ENCODE measurements at regions of chr19 and their contacts with region 1.

Region 1: GRCh38 chr19:46265217-46265828 is 31.5 kb upstream of the HIF3A start:
- DNase-seq: peak; percentile 70
- H3K4me3 ChIP-seq: no peak overlapping the region
- H3K27ac ChIP-seq: no peak overlapping the region
- H3K4me1 ChIP-seq: no peaks in the 10 kb centered on the region
- H3K27me3 ChIP-seq: no peaks in the 10 kb centered on the region
- CTCF ChIP-seq: peak; percentile 77

Region 2: DNA sequence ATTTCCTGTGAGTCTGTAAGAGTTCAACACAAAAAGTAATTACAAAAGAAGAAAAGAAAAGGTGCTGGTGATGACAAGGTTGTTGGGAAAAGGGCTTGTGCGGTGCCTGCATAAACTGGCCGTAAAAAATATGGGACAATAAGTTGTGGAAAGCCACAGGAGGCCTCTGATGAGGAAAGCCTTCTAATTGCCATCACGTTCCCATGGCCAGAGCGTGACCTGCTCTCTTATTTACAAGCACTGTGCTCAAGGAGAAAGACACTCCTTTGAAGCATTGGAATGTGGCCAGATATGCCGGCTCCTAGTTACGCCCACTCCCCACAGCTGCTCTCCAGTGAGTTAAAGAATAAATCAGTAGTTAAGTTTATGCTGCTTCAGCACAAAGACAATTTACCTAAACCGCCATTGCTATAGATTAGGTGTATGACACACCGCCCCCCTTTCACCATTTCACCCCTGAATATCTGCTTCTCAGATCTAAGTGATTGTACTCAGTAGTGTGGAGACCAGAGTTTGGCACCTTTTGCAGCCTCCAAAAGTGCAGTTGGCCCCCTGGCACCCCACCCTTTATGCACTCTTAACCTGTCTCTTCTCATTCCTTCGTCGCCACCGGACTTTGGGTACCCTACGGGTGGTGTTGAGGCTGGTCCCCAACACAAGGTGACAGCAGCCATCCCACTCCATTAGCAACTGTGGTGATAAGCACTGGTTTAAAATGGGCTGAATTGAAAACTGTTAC is 234.3 kb before region 1 on chr19:
- intact Hi-C with region 1: loop called (anchors 2 kb)
- DNase-seq: no peak
- H3K4me3 ChIP-seq: no peak overlapping the region
- H3K27ac ChIP-seq: no peak overlapping the region
- H3K4me1 ChIP-seq: no peaks in the 10 kb centered on the region
- H3K27me3 ChIP-seq: no peaks in the 10 kb centered on the region
- CTCF ChIP-seq: no peak

Region 3: GRCh38 chr19:46192992-46193650 is 72.2 kb before region 1 on chr19:
- intact Hi-C with region 1: loop called (anchors 5 kb)
- DNase-seq: peak; percentile 20
- H3K4me3 ChIP-seq: no peak overlapping the region
- H3K27ac ChIP-seq: no peak overlapping the region
- H3K4me1 ChIP-seq: no peaks in the 10 kb centered on the region
- H3K27me3 ChIP-seq: no peaks in the 10 kb centered on the region
- CTCF ChIP-seq: no peak

Region 4: GRCh38 chr19:46319613-46320012 is 54.3 kb after region 1 on chr19:
- intact Hi-C with region 1: no loop called
- DNase-seq: no peak
- H3K4me3 ChIP-seq: no peak overlapping the region
- H3K27ac ChIP-seq: no peak overlapping the region
- H3K4me1 ChIP-seq: no peaks in the 10 kb centered on the region
- H3K27me3 ChIP-seq: no peaks in the 10 kb centered on the region
- CTCF ChIP-seq: no peak

Region 5: GRCh38 chr19:46404055-46404752 is 138.9 kb after region 1 on chr19:
- intact Hi-C with region 1: no loop called
- DNase-seq: peak; percentile 82
- H3K4me3 ChIP-seq: peak overlapping the region; percentile 47
- H3K27ac ChIP-seq: no peak overlapping the region
- H3K4me1 ChIP-seq: peaks cover 5% of the 10 kb centered on the region
- H3K27me3 ChIP-seq: peaks cover 4% of the 10 kb centered on the region
- CTCF ChIP-seq: no peak

Measured in colonic mucosa (tissue), 4 donors.